ENCODE measurements at regions of chr5 and their contacts with region 1.

Region 1: GRCh38 chr5:138889994-138890393 is 14.9 kb upstream of the LRRTM2 start:
- DNase-seq: no peak
- H3K4me3 ChIP-seq: no peak overlapping the region
- CTCF ChIP-seq: no peak

Region 2: GRCh38 chr5:138844812-138845513 is 45.0 kb before region 1 on chr5:
- in situ Hi-C with region 1: loop called (anchors 5 kb)
- DNase-seq: peak; percentile 59
- H3K4me3 ChIP-seq: no peak overlapping the region
- CTCF ChIP-seq: no peak

Region 3: GRCh38 chr5:139043157-139043905 is 153.3 kb after region 1 on chr5:
- in situ Hi-C with region 1: no loop called
- DNase-seq: peak; percentile 82
- H3K4me3 ChIP-seq: no peak overlapping the region
- CTCF ChIP-seq: no peak

Measured in astrocyte of the cerebellum (primary cell).